CD14-positive monocyte (primary cell): ENCODE measurements at regions of chr6 and their contacts with region 1.

Region 1: DNA sequence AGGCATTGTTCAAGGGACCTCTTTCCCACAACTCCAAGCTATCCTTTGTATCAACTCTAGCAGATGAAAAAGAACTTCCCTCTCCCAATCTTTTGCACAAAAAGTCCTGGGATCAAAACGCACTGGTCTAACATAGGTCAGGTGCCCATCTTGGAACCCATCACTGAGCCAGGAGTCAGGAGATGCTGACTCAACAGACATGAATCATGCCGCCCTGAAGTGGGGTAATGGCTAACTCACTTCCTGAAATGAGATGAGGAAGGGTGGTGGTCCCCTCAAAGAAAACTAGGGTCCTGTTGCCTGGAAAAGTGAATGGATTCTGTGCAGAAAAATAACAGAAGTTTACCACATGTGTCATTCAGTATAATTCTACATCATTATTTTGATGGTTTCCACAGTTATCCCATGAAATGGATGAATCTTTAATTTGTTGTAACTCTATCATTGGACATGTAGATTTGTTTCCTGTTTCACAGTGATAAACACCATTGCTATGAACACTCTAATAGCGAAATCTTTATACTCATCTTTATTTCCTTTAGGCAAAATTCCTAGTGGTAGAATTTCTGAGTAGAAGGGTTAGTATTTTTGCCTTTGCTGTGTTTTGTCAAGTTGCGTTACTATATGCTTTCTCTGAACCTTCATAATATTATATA is 151.3 kb downstream of the SLC16A10 start:
- DNase-seq: peak; percentile 84 to 96 (median 91)
- H3K4me3 ChIP-seq: peak overlapping the region in 1 of 3 experiments; percentile 44
- H3K4me3 Mint-ChIP-seq: no peak overlapping the region
- H3K27ac ChIP-seq: peak overlapping the region in 1 of 2 donors; percentile 85
- H3K27ac Mint-ChIP-seq: peak overlapping the region; percentile 58 to 97 (median 85)
- H3K4me1 ChIP-seq: peaks cover 25 to 30% of the 10 kb centered on the region in 2 donors
- H3K4me1 Mint-ChIP-seq: peaks cover 28% of the 10 kb centered on the region
- H3K27me3 ChIP-seq: no peaks in the 10 kb centered on the region
- H3K27me3 Mint-ChIP-seq: peaks cover 0 to 2% (median 0%) of the 10 kb centered on the region in 3 donors
- CTCF ChIP-seq: no peak

Region 2: GRCh38 chr6:111119571-111120329 is 118.8 kb before region 1 on chr6:
- intact Hi-C with region 1: loop called in 1 of 2 experiments (anchors 5 kb)
- DNase-seq: peak; percentile 72 to 89 (median 87)
- H3K4me3 ChIP-seq: no peak overlapping the region
- H3K4me3 Mint-ChIP-seq: no peak overlapping the region
- H3K27ac ChIP-seq: no peak overlapping the region
- H3K27ac Mint-ChIP-seq: peak overlapping the region; percentile 23 to 92 (median 80)
- H3K4me1 ChIP-seq: no peaks in the 10 kb centered on the region
- H3K4me1 Mint-ChIP-seq: peaks cover 9% of the 10 kb centered on the region
- H3K27me3 ChIP-seq: no peaks in the 10 kb centered on the region
- H3K27me3 Mint-ChIP-seq: peaks cover 0 to 3% (median 1%) of the 10 kb centered on the region in 3 donors
- CTCF ChIP-seq: no peak

Region 3: GRCh38 chr6:111478749-111479148 is 240.2 kb after region 1 on chr6:
- intact Hi-C with region 1: loop called in 1 of 2 experiments (anchors 5 kb)
- DNase-seq: peak; percentile 34 to 69 (median 53)
- H3K4me3 ChIP-seq: no peak overlapping the region
- H3K4me3 Mint-ChIP-seq: peak overlapping the region in 1 of 2 donors; percentile 18
- H3K27ac ChIP-seq: no peak overlapping the region
- H3K27ac Mint-ChIP-seq: peak overlapping the region in 1 of 7 donors; percentile 66
- H3K4me1 ChIP-seq: peaks cover 10 to 21% of the 10 kb centered on the region in 2 donors
- H3K4me1 Mint-ChIP-seq: peaks cover 24% of the 10 kb centered on the region
- H3K27me3 ChIP-seq: no peaks in the 10 kb centered on the region
- H3K27me3 Mint-ChIP-seq: no peaks in the 10 kb centered on the region
- CTCF ChIP-seq: peak; percentile 73